ENCODE measurements at regions of chr11 and their contacts with region 1.

Region 1: GRCh38 chr11:17864478-17864941 is 129.9 kb downstream of the KCNC1 start:
- H3K4me3 ChIP-seq: no peak overlapping the region
- H3K27ac ChIP-seq: no peak overlapping the region
- H3K4me1 ChIP-seq: no peaks in the 10 kb centered on the region
- CTCF ChIP-seq: no peak

Region 2: GRCh38 chr11:17591293-17591692 is 273.2 kb before region 1 on chr11:
- CTCF ChIA-PET with region 1: no interaction called
- POLR2A ChIA-PET with region 1: no interaction called
- H3K4me3 ChIP-seq: no peak overlapping the region
- H3K27ac ChIP-seq: no peak overlapping the region
- H3K4me1 ChIP-seq: no peaks in the 10 kb centered on the region
- CTCF ChIP-seq: no peak

Region 3: DNA sequence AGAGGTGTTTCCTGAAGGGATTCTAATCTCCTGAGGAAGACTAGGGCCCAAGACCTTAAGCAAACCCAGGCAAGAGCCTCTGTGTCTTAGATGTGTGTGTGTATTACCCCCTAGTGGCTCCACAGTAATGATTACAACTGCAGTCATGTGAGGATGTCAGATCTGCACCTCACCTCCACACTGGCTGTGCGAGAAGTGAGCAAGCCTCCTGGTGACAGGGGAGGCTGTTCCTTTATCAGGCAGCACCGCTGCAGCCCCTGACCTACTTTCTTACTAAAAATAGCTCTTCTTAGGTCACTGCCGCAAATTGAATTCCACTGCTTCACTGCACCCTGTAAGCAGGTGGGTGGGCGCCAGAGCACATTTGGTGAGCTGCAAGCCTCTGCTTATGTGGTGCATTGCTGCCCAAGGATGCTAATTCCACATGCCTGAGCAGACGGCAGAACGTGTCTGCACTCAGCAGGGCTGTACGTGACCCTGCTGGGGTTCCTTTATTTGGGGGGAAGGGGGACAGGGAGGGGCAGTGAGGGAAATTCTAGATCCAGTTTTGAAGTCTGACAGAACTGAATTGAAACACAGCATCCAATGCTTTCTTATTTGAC is 17.6 kb before region 1 on chr11:
- CTCF ChIA-PET with region 1: interaction called, 24 read pairs
- POLR2A ChIA-PET with region 1: no interaction called
- H3K4me3 ChIP-seq: no peak overlapping the region
- H3K27ac ChIP-seq: no peak overlapping the region
- H3K4me1 ChIP-seq: no peaks in the 10 kb centered on the region
- CTCF ChIP-seq: no peak

Region 4: GRCh38 chr11:17883946-17884345 is 19.4 kb after region 1 on chr11:
- CTCF ChIA-PET with region 1: interaction called, 11 read pairs
- POLR2A ChIA-PET with region 1: no interaction called
- H3K4me3 ChIP-seq: no peak overlapping the region
- H3K27ac ChIP-seq: no peak overlapping the region
- H3K4me1 ChIP-seq: no peaks in the 10 kb centered on the region
- CTCF ChIP-seq: no peak

Region 5: GRCh38 chr11:17906436-17906835 is 41.9 kb after region 1 on chr11:
- CTCF ChIA-PET with region 1: interaction called, 10 read pairs
- POLR2A ChIA-PET with region 1: no interaction called
- H3K4me3 ChIP-seq: no peak overlapping the region
- H3K27ac ChIP-seq: no peak overlapping the region
- H3K4me1 ChIP-seq: no peaks in the 10 kb centered on the region
- CTCF ChIP-seq: no peak